Activated T-helper 2 cell treated with anti-CD3 and anti-CD28 coated beads, Interferon-gamma antibody, Interleukin-2, Interleukin-4, amounts not matched to agents 10 μg/mL and 5 μg/mL and 100 μg/mL, durations not matched to agents 14 hours and 24 hours and 36 hours (primary cell): ENCODE measurements at regions of chr12 and their contacts with region 1.

Region 1: DNA sequence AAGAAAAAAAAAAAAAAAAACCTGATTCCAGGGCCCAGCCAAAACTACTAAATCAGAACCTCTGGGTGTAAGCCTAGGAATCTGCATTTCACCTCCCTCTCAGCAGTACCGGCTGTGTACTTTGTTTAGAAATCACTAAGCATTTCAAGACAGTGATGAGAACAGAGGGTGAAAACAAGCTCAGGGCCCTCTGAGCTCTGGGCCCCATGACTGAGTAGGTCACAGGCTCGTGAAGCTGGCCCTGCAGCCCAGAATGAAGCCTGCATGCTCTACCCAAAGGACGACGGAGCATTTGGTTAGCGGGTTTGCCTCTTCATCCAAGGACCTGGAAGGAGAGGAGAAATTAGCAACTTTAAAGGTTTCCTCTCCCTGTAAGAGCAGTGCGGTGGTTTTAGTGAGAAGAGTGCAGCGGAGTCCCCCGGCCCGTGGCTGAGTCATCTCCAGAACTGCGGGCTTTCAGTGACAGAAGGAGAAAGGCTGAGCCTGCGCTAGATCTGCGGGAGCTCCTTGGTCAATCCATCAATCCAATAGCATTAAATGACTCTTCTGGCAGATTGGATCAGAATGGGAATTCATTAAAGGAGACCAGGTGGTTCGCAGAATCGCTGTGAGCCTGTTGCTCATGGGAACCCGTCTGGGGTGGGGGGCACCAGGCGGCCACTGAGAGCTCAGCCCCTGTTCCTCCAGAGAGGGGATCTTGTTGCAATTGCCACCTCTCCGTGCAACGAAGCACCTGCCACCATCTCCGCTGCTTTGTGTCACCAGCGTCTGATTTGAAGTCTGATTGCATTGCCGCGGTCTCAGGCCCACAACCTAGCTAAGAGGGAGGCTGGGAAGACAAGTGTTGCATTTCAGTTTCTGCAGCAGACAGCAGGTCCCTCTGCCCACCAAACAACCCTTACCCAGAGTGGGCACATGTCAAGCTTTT is 7.3 kb downstream of the IL31 start:
- DNase-seq: peak; percentile 47
- H3K4me3 Mint-ChIP-seq: no peak overlapping the region
- H3K27ac Mint-ChIP-seq: peak overlapping the region; percentile 77
- H3K4me1 Mint-ChIP-seq: peaks cover 32% of the 10 kb centered on the region
- H3K27me3 Mint-ChIP-seq: no peaks in the 10 kb centered on the region

Region 2: GRCh38 chr12:122078141-122079032 is 88.3 kb before region 1 on chr12 and contains the start of gene MLXIP:
- intact Hi-C with region 1: loop called (anchors 2 kb)
- DNase-seq: peak; percentile 87
- H3K4me3 Mint-ChIP-seq: peak within 1 kb of the TSS; percentile 86
- H3K27ac Mint-ChIP-seq: peak within 1 kb of the TSS; percentile 74
- H3K4me1 Mint-ChIP-seq: peaks cover 37% of the 10 kb centered on the region
- H3K27me3 Mint-ChIP-seq: peaks cover 2% of the 10 kb centered on the region
- total RNA-seq, gene MLXIP: 36.7 and 41.4 TPM in 2 replicates

Region 3: DNA sequence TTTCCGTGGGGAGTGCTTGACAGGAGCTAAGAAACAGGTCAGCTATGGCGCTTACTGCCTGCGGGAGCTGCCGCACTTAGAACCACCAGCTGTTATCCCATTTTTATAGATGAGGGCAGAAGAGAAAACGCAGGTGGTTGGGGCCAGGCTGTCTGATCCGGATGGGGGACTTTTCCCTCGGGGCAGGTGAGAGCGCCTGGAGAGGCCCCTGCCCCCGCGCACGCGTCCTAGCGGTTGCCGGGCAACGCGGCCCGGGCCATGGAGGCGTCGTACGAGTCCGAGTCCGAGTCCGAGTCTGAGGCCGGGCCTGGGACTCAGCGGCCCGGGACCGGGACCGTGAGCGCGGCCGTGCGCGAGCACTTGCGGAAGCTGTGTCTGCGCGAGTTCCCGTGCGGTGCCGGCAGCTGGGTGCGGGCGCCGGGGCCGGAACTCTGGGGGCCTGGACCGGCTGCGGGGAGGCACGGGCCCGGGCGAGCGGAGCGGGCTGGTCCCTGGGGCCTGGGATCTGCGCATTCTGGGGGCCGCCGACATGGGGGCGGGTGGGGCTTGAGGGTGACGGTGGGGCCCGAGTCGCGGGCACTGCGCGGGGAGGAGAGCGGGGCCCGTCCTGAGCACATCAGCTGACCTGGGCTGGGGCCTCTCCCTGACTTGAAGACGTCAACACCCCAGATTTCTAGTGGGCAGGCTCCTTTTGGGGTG is 16.4 kb after region 1 on chr12 and contains the start of gene LRRC43:
- intact Hi-C with region 1: loop called (anchors 2 kb)
- DNase-seq: peak; percentile 26
- H3K4me3 Mint-ChIP-seq: peak within 1 kb of the TSS; percentile 73
- H3K27ac Mint-ChIP-seq: no peak within 1 kb of the TSS
- H3K4me1 Mint-ChIP-seq: peaks cover 15% of the 10 kb centered on the region
- H3K27me3 Mint-ChIP-seq: peaks cover 10% of the 10 kb centered on the region
- total RNA-seq, gene LRRC43: 1.0 and 1.6 TPM in 2 replicates

Region 4: DNA sequence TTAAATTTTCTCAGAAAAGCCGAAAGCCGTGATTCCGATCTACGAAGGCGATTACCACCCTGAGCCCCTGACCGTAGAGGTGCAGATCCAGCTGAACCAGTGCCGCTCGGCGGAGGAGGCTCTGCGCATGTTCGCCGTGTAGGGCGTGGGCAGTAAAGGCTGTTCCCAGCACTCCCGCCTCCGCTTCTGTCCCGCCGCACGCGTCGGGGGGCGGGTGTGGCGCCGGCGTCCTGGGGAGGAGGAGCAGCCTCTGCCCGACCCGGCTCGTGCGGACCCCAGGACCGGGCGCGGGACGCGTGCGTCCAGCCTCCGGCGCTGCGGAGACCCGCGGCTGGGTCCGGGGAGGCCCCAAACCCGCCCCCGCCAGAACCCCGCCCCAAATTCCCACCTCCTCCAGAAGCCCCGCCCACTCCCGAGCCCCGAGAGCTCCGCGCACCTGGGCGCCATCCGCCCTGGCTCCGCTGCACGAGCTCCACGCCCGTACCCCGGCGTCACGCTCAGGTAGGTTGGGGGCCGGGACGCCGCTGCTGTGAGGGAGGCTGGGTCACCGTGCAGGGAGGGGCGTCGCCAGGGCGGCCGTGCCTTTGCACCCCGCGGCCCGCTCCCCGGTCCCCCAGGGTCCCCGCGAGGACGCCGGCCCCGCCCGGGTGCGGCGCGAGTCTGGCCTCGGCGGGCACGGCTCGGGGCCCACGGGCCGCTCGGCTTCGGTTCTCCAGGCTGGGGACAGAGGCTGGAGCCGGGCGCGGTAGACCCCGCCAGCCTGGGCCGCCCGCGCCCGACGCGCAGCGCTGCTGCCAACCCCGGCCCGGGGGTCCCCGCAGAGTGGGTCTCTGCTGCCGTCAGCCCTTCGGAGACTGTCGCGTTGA is 36.8 kb after region 1 on chr12 and contains the start of gene B3GNT4:
- intact Hi-C with region 1: loop called (anchors 5 kb)
- DNase-seq: peak; percentile 45
- H3K4me3 Mint-ChIP-seq: peak within 1 kb of the TSS; percentile 79
- H3K27ac Mint-ChIP-seq: no peak within 1 kb of the TSS
- H3K4me1 Mint-ChIP-seq: peaks cover 6% of the 10 kb centered on the region
- H3K27me3 Mint-ChIP-seq: peaks cover 29% of the 10 kb centered on the region
- total RNA-seq, gene B3GNT4: 1.0 and 1.6 TPM in 2 replicates

Region 5: DNA sequence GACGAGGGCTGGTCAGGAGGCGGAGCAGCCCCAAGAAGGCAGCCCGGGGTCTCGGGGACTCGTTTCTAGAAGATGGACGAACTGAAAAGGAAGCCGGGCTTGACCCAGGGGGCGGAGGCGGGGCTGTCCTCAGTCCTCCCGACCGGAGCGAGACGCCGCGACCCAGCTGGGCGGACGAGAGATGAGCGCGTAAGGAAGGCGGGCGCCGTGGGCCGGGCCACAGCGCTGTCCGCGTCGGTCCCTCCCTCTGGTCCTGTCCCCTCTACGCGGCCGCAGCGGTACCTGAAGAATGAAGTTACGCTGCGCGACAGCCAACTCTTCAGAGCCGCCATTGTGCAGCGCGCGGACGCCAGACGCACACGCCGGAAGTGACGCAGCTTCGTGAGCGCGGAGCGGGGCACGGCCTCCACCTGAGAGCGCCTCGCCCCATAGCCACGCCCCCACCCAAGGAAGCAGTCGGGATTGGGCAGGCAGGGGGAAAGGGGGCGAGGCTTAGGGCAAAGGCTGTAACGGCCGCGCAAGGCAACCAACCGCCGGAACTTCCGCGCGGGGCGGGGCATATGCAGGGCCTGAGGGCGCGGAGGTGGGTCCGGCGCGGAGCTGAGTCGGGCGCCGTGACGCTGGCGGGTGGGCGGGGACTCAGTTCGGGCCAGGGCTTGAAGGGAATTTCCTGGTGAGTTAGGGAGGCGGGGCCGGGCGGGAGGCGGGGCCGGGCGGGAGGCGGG is 59.2 kb after region 1 on chr12 and contains the start of gene DIABLO:
- intact Hi-C with region 1: no loop called
- DNase-seq: peak; percentile 100
- H3K4me3 Mint-ChIP-seq: peak within 1 kb of the TSS; percentile 88
- H3K27ac Mint-ChIP-seq: peak within 1 kb of the TSS; percentile 89
- H3K4me1 Mint-ChIP-seq: peaks cover 22% of the 10 kb centered on the region
- H3K27me3 Mint-ChIP-seq: no peaks in the 10 kb centered on the region
- total RNA-seq, gene DIABLO: 54.7 and 56.5 TPM in 2 replicates